Endothelial cell of umbilical vein (primary cell): ENCODE measurements at regions of chr3 and their contacts with region 1.

Region 1: GRCh38 chr3:190321789-190322603 is at the start of gene CLDN1:
- DNase-seq: peak; percentile 67
- H3K4me3 ChIP-seq: peak within 1 kb of the TSS in 2 of 3 experiments; percentile 9 to 46
- H3K27ac ChIP-seq: no peak within 1 kb of the TSS
- H3K4me1 ChIP-seq: peaks cover 4% of the 10 kb centered on the region
- H3K27me3 ChIP-seq: peaks cover 2 to 10% of the 10 kb centered on the region in 2 experiments
- CTCF ChIP-seq: peak; percentile 93 to 98
- POLR2A ChIP-seq: no peak
- total RNA-seq, gene CLDN1: 0.27 and 0.32 TPM in 2 replicates

Region 2: DNA sequence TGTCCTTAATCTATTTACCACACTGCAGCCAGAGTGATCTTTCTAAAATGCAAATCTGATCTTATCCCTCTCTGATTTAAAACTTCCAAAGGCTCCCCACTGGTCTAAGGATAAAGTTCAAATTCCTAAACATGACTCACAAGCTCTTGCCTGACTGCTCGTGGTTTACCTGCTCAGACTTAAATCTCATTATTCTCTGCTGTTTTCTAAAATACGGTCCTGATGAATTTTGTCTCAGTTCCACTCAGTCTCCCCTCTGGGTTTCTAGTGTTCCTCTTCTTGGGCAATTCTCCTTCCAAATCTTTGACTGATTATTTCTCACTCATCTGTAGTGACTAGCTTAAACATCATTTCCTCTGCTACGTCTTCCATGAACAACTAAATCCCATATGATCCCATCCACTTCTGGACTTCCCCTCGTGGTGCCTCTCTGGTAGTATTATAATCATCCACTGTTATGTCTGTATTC is 309.6 kb before region 1 on chr3:
- CTCF ChIA-PET with region 1: interaction called, 11 read pairs
- POLR2A ChIA-PET with region 1: no interaction called
- dilution Hi-C with region 1: no loop called
- intact Hi-C with region 1: loop called (anchors 1 kb)
- DNase-seq: peak; percentile 40
- H3K4me3 ChIP-seq: no peak overlapping the region
- H3K27ac ChIP-seq: peak overlapping the region; percentile 55
- H3K4me1 ChIP-seq: peaks cover 25% of the 10 kb centered on the region
- H3K27me3 ChIP-seq: no peaks in the 10 kb centered on the region
- CTCF ChIP-seq: no peak
- POLR2A ChIP-seq: no peak

Region 3: GRCh38 chr3:190205739-190206138 is 116.3 kb before region 1 on chr3:
- CTCF ChIA-PET with region 1: interaction called, 13 read pairs
- POLR2A ChIA-PET with region 1: no interaction called
- dilution Hi-C with region 1: no loop called
- intact Hi-C with region 1: no loop called
- DNase-seq: no peak
- H3K4me3 ChIP-seq: no peak overlapping the region
- H3K27ac ChIP-seq: no peak overlapping the region
- H3K4me1 ChIP-seq: no peaks in the 10 kb centered on the region
- H3K27me3 ChIP-seq: peaks cover 0 to 2% of the 10 kb centered on the region in 2 experiments
- CTCF ChIP-seq: no peak
- POLR2A ChIP-seq: no peak

Region 4: GRCh38 chr3:190301591-190301990 is 20.4 kb before region 1 on chr3:
- CTCF ChIA-PET with region 1: interaction called, 28 read pairs
- POLR2A ChIA-PET with region 1: no interaction called
- dilution Hi-C with region 1: no loop called
- intact Hi-C with region 1: no loop called
- DNase-seq: peak; percentile 24
- H3K4me3 ChIP-seq: no peak overlapping the region
- H3K27ac ChIP-seq: no peak overlapping the region
- H3K4me1 ChIP-seq: peaks cover 8% of the 10 kb centered on the region
- H3K27me3 ChIP-seq: no peaks in the 10 kb centered on the region
- CTCF ChIP-seq: no peak
- POLR2A ChIP-seq: no peak

Region 5: DNA sequence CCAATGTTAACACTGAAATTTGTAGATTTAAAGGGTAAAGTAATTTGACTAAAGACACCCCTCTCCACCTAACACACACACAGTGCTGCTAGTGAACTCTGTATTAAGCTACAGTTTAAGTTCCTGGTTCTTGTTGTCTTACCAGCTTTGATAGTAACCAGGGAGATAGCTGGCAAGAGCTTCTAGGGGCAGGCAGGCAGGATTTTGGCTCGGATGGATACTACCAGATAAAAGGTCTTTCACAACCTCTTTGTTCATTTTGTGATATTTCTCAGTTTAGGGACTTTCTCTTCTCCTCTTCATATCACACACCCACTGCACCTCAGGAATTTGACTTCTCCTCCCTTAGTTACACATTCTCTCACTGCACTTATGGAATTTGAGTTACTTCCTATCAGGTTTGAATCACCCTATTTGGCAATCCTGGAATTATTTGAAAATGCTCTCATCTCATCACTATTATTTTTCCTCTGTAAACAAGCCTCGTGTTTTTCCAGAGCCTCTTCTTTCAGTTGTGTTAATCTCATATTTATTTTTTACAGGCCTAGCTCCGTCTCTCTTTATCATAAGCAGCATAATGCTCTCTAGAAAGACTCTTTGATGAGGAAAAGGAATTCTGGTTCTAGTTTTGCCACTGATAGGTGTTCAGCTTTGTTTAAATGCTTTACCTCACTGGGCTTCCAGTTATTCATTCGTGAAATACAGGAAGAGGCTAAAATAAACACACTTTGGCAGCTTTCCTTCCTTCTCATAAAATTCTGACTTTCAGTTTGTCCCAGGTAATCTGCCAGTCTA is 23.2 kb after region 1 on chr3:
- CTCF ChIA-PET with region 1: interaction called, 41 read pairs
- POLR2A ChIA-PET with region 1: no interaction called
- dilution Hi-C with region 1: no loop called
- intact Hi-C with region 1: loop called (anchors 1 kb)
- DNase-seq: peak; percentile 75
- H3K4me3 ChIP-seq: peak overlapping the region in 1 of 3 experiments; percentile 48
- H3K27ac ChIP-seq: peak overlapping the region; percentile 89
- H3K4me1 ChIP-seq: peaks cover 21% of the 10 kb centered on the region
- H3K27me3 ChIP-seq: no peaks in the 10 kb centered on the region
- CTCF ChIP-seq: no peak
- POLR2A ChIP-seq: peak; percentile 40

Region 6: GRCh38 chr3:190384241-190384863 is 62.4 kb after region 1 on chr3:
- CTCF ChIA-PET with region 1: interaction called, 55 read pairs
- POLR2A ChIA-PET with region 1: no interaction called
- dilution Hi-C with region 1: no loop called
- intact Hi-C with region 1: loop called (anchors 1 kb)
- DNase-seq: peak; percentile 45
- H3K4me3 ChIP-seq: no peak overlapping the region
- H3K27ac ChIP-seq: no peak overlapping the region
- H3K4me1 ChIP-seq: peaks cover 12% of the 10 kb centered on the region
- H3K27me3 ChIP-seq: no peaks in the 10 kb centered on the region
- CTCF ChIP-seq: peak; percentile 8 to 12
- POLR2A ChIP-seq: no peak

Region 7: DNA sequence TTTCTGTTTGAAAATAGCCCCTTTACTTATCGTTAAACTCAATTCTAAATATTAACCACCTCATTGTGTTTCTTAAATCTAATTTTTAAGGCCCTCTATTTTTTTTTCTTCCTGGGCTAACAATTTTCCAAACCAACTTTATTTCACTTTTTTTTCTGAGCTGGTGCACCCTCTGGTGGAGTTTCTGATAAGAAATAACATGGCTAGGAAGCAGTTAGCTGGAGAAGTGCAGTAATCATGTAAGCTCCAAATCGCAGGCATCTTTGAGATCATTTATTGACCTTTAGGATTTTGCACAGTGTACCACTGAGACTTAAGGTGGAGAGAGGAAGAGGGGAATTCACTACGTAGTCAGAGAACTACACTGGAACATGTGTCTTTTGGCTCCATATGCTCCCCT is 121.3 kb after region 1 on chr3:
- CTCF ChIA-PET with region 1: interaction called, 14 read pairs
- POLR2A ChIA-PET with region 1: no interaction called
- dilution Hi-C with region 1: no loop called
- intact Hi-C with region 1: no loop called
- DNase-seq: peak; percentile 29
- H3K4me3 ChIP-seq: no peak overlapping the region
- H3K27ac ChIP-seq: no peak overlapping the region
- H3K4me1 ChIP-seq: peaks cover 4% of the 10 kb centered on the region
- H3K27me3 ChIP-seq: peaks cover 4% of the 10 kb centered on the region in 2 experiments
- CTCF ChIP-seq: peak in 1 of 2 donors; percentile 10
- POLR2A ChIP-seq: no peak